ENCODE measurements at regions of chr4 and their contacts with region 1.

Region 1: DNA sequence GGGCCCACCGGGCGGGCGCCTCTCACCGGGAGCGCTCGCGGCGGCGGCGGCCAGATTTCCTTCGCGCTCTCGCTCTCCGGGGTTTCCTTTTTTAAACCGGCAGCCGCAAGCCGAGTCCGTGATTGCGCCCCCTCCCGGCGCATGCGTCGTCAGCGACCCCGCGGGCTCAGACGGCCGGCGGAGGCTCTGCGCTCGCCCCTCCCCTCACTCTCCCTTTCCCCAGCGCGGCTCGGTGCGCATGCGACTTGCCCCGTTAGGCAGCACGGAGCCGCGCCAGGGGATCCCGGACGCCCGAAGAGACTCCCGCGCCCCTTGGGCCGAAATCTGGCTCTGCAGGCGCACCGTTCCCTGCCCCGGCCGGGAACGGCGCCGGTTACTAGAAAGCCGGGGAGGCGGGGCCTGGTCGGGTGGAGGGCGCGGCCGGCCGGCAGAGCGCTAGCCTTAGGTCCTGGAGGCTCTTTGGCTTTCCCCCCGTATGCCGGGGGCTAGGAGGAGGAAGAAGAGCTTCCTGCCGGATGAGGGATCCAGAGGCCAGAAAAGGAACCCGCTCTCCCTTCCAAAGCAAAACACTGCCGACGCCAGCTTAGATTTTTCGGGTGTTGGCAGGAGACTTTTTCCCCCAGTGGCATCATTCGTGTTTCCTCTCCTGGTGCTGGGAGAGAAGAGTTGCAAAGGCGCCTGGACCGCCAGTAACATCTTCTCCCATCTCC is at the start of gene CLOCK:
- DNase-seq: peak; percentile 60 to 91 (median 82)
- ATAC-seq: peak; percentile 72
- H3K4me3 ChIP-seq: peak within 1 kb of the TSS; percentile 90 to 91
- H3K4me3 Mint-ChIP-seq: peak within 1 kb of the TSS; percentile 93
- H3K27ac ChIP-seq: peak within 1 kb of the TSS; percentile 71 to 82
- H3K27ac Mint-ChIP-seq: peak within 1 kb of the TSS; percentile 93
- H3K4me1 ChIP-seq: peaks cover 9% of the 10 kb centered on the region
- H3K4me1 Mint-ChIP-seq: peaks cover 40% of the 10 kb centered on the region
- H3K27me3 ChIP-seq: no peaks in the 10 kb centered on the region
- H3K27me3 Mint-ChIP-seq: peaks cover 5% of the 10 kb centered on the region
- CTCF ChIP-seq: peak; percentile 41
- total RNA-seq, gene CLOCK: 3.7 to 4.3 TPM

Region 2: DNA sequence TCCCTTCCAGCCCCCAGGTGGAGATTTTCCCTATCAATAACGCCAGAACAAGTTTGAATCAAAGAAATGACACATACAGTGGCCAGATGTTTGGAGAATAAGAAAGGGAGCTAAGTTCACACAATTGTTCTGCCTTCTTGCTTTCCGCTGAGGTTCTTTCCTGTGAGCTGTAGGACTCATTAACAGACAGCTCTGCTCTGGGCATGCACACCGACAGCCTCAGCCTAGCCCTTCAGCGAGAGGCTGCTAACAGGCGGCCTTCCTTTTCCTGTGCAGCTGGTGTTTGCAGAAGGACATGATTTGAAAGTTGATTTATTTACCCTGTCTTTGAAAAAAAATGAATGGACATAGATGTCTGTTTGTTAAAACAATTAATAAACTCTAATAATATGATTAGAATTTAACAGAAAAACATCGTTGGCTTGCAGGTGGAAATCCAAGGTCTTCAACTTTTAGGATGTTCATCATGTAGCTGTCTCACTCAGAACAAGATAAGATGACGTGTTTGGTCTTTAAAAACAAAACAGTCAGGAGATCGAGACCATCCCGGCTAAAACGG is 604.8 kb before region 1 on chr4:
- CTCF ChIA-PET with region 1: no interaction called
- POLR2A ChIA-PET with region 1: interaction called, 3 read pairs
- intact Hi-C with region 1: loop called (anchors 10 kb)
- DNase-seq: peak; percentile 18 to 78 (median 34)
- ATAC-seq: peak; percentile 79
- H3K4me3 ChIP-seq: peak overlapping the region in 1 of 2 experiments; percentile 12
- H3K4me3 Mint-ChIP-seq: peak overlapping the region; percentile 71
- H3K27ac ChIP-seq: peak overlapping the region; percentile 59 to 72
- H3K27ac Mint-ChIP-seq: peak overlapping the region; percentile 98
- H3K4me1 ChIP-seq: peaks cover 40% of the 10 kb centered on the region
- H3K4me1 Mint-ChIP-seq: peaks cover 56% of the 10 kb centered on the region
- H3K27me3 ChIP-seq: no peaks in the 10 kb centered on the region
- H3K27me3 Mint-ChIP-seq: no peaks in the 10 kb centered on the region
- CTCF ChIP-seq: no peak

Region 3: GRCh38 chr4:55395529-55396307 is 151.2 kb before region 1 on chr4 and contains the start of gene TMEM165:
- CTCF ChIA-PET with region 1: interaction called, 7 read pairs
- POLR2A ChIA-PET with region 1: interaction called, 11 read pairs
- intact Hi-C with region 1: loop called (anchors 1 to 2 kb)
- DNase-seq: peak; percentile 72 to 93 (median 86)
- ATAC-seq: peak; percentile 94
- H3K4me3 ChIP-seq: peak within 1 kb of the TSS; percentile 68 to 74
- H3K4me3 Mint-ChIP-seq: peak within 1 kb of the TSS; percentile 97
- H3K27ac ChIP-seq: peak within 1 kb of the TSS; percentile 83 to 93
- H3K27ac Mint-ChIP-seq: peak within 1 kb of the TSS; percentile 98
- H3K4me1 ChIP-seq: peaks cover 36% of the 10 kb centered on the region
- H3K4me1 Mint-ChIP-seq: peaks cover 38% of the 10 kb centered on the region
- H3K27me3 ChIP-seq: no peaks in the 10 kb centered on the region
- H3K27me3 Mint-ChIP-seq: no peaks in the 10 kb centered on the region
- CTCF ChIP-seq: peak; percentile 0
- total RNA-seq, gene TMEM165: 31.0 to 31.5 TPM

Region 4: GRCh38 chr4:55808186-55808585 is 261.3 kb after region 1 on chr4:
- CTCF ChIA-PET with region 1: no interaction called
- POLR2A ChIA-PET with region 1: no interaction called
- intact Hi-C with region 1: no loop called
- DNase-seq: no peak
- ATAC-seq: no peak
- H3K4me3 ChIP-seq: no peak overlapping the region
- H3K4me3 Mint-ChIP-seq: no peak overlapping the region
- H3K27ac ChIP-seq: no peak overlapping the region
- H3K27ac Mint-ChIP-seq: no peak overlapping the region
- H3K4me1 ChIP-seq: no peaks in the 10 kb centered on the region
- H3K4me1 Mint-ChIP-seq: no peaks in the 10 kb centered on the region
- H3K27me3 ChIP-seq: no peaks in the 10 kb centered on the region
- H3K27me3 Mint-ChIP-seq: peaks cover 8% of the 10 kb centered on the region
- CTCF ChIP-seq: no peak

Region 5: DNA sequence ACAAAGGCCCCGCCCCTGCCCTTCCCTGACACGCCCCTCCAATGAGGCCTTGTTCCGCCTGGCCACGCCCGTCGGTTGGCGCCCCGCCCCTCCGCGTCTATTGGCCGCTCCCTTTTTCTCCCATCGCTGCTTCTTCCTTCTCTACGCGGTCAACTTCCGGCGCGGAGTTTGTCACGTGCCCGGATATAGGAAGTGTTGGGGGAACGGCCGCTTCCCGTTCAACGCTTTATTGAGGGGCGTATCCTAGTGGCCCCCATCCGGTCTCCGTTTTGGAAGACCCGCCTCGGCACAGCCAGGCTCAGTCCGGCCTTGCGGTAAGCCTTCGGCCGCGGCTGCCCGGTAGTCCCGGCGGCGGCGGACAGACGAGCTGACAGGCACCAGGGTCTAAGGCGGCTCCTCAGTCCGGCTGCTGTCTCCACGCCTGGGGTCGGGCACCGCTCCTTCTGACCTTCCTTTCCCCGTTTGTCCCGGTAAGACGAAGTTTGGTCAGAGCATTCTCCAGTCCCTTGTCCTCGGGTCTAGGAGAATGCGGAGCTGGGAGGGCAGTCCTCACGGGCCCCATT is 306.7 kb after region 1 on chr4 and contains the start of gene EXOC1:
- CTCF ChIA-PET with region 1: no interaction called
- POLR2A ChIA-PET with region 1: no interaction called
- intact Hi-C with region 1: loop called (anchors 1 to 2 kb)
- DNase-seq: peak; percentile 90 to 98 (median 97)
- ATAC-seq: peak; percentile 96
- H3K4me3 ChIP-seq: peak within 1 kb of the TSS; percentile 96
- H3K4me3 Mint-ChIP-seq: peak within 1 kb of the TSS; percentile 36
- H3K27ac ChIP-seq: peak within 1 kb of the TSS; percentile 70 to 86
- H3K27ac Mint-ChIP-seq: peak within 1 kb of the TSS; percentile 64
- H3K4me1 ChIP-seq: peaks cover 40% of the 10 kb centered on the region
- H3K4me1 Mint-ChIP-seq: peaks cover 38% of the 10 kb centered on the region
- H3K27me3 ChIP-seq: no peaks in the 10 kb centered on the region
- H3K27me3 Mint-ChIP-seq: no peaks in the 10 kb centered on the region
- CTCF ChIP-seq: no peak
- total RNA-seq, gene EXOC1: 12.1 to 14.5 TPM

Region 6: DNA sequence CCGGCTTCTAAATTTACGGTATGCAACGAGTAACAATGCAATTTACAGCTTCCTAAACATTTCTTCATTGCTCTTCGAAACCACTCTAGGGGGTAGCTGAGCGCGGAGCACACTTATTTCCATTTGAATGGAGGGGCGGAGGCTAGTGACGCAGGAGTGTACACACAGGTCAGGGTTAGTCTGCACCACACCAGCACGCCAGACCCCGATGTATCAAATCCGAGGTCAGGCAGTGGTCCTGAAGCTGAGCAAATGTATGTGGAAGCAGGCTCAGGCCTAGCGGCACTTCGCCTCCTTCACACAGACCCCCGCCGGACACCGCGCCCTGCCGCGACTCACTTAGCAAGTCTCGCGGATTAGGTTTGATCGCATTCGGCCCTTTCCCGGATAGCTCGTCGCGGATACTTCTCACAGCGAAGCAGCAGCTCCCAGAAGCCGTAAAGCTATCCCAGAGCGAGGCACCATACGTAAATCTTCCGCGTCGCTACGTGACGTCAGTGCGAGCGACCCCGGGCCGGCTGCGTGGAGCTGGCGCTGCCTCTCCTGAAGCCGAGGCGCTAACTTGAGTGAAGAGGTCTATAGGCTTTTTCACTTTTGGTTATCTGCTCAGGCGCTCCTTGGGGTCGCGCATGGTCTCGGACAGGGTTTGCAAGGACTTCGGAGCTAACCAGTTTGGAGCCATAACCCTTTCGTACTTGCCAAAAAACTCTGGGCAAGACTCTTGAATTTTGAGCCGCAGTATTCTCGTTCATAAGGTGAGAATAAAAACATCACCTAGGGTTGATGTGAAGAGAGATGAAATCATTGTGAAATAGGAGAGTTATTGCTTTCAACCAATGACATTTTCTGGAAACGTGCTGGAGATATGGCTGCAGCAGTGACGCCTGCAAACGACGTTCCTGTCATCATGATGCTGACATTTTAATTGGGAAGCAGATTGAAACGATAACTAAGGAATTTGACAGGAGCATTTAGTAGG is 840.4 kb after region 1 on chr4 and contains the start of gene AASDH:
- CTCF ChIA-PET with region 1: no interaction called
- POLR2A ChIA-PET with region 1: no interaction called
- intact Hi-C with region 1: loop called (anchors 10 kb)
- DNase-seq: peak; percentile 91 to 99 (median 96)
- ATAC-seq: peak; percentile 88
- H3K4me3 ChIP-seq: peak within 1 kb of the TSS; percentile 79 to 82
- H3K4me3 Mint-ChIP-seq: peak within 1 kb of the TSS; percentile 97
- H3K27ac ChIP-seq: peak within 1 kb of the TSS; percentile 93 to 94
- H3K27ac Mint-ChIP-seq: peak within 1 kb of the TSS; percentile 99
- H3K4me1 ChIP-seq: peaks cover 21% of the 10 kb centered on the region
- H3K4me1 Mint-ChIP-seq: peaks cover 46% of the 10 kb centered on the region
- H3K27me3 ChIP-seq: no peaks in the 10 kb centered on the region
- H3K27me3 Mint-ChIP-seq: no peaks in the 10 kb centered on the region
- CTCF ChIP-seq: no peak
- total RNA-seq, gene AASDH: 9.1 to 9.8 TPM

Region 7: DNA sequence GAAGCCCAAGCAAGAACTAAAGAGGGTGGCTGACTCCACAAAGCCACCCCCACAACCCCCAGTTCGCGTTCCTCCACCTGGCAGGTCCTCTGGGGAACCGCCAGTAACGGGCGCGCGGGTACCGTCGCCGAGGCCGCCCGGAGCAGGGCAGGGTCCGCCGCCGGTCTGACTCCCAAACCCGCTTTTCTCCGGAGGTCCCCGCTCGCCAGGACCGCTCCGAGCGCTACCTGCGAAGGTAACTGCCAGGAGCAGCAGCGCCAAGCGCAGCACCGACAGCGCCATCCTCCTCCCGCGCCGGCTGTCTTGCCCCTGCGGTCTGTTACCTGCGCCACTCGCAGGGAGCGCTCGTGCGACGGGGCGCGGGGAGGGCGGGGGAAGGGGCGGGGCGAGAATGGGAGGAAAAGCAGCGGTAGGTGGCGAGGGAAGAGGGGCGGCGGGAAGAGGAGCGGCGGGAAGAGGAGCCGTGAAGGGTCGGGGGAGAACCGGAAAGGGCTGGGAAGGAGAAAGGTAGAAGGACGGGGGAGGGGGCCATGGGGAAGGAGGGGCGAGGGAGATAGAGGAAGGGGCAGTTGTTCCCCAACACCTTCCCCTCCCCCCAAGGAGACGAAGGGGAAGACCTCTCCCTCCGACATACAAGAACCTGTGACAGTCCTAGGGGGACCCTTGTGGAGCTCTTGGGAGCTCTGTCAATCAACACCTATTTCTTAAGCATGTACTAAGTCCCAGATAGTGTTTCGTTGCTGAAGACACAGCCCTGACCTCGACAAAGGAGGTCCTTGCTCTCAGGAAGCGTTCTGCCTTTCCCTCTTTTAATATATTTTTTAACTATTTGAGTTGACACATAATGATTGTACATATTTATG is 1274.7 kb after region 1 on chr4 and contains the start of gene SPINK2:
- CTCF ChIA-PET with region 1: no interaction called
- POLR2A ChIA-PET with region 1: no interaction called
- intact Hi-C with region 1: loop called in 1 of 2 experiments (anchors 5 kb)
- DNase-seq: peak; percentile 41 to 88 (median 76)
- ATAC-seq: peak; percentile 87
- H3K4me3 ChIP-seq: peak within 1 kb of the TSS; percentile 58 to 65
- H3K4me3 Mint-ChIP-seq: peak within 1 kb of the TSS; percentile 81
- H3K27ac ChIP-seq: peak within 1 kb of the TSS; percentile 36
- H3K27ac Mint-ChIP-seq: peak within 1 kb of the TSS; percentile 27
- H3K4me1 ChIP-seq: peaks cover 34% of the 10 kb centered on the region
- H3K4me1 Mint-ChIP-seq: peaks cover 36% of the 10 kb centered on the region
- H3K27me3 ChIP-seq: no peaks in the 10 kb centered on the region
- H3K27me3 Mint-ChIP-seq: no peaks in the 10 kb centered on the region
- CTCF ChIP-seq: no peak
- total RNA-seq, gene SPINK2: 2.6 to 4.4 TPM

Region 8: DNA sequence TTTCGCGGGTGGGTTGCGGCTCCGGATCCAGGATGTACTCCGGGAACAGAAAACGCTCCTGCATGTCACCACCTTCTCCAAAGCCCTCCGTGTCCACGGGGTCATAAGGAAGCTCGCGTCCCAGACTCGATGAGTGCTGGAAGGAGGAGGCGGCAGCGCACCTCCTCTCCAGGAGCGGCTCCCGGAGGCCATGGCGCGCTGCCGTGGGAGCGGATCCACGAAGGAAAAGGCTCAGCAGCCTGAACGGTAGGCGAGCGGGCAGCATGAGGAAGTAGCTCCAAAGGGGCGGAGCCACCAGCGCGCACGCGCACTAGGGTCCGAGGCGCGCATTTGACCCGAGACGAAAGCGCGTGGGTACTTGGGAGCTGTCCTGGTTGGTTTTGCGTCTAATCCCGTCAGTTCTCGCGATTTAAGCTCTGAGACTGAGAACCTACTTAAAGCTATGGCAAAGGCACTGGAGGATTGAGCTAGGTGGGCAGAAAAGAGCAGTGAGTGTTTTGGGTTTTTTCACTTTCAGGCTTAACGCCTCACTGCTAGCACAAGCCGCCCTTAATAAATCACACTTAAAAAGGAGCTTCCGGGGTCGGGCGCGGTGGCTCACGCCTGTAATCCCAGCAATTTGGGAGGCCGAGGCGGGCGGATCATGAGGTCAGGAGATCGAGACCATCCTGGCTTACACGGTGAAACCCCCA is 1430.6 kb after region 1 on chr4 and contains the start of gene NOA1:
- CTCF ChIA-PET with region 1: no interaction called
- POLR2A ChIA-PET with region 1: interaction called, 6 read pairs
- intact Hi-C with region 1: loop called in 1 of 2 experiments (anchors 5 kb)
- DNase-seq: peak; percentile 95 to 99 (median 97)
- ATAC-seq: peak; percentile 79
- H3K4me3 ChIP-seq: peak within 1 kb of the TSS; percentile 94 to 100
- H3K4me3 Mint-ChIP-seq: peak within 1 kb of the TSS; percentile 93
- H3K27ac ChIP-seq: peak within 1 kb of the TSS; percentile 78 to 84
- H3K27ac Mint-ChIP-seq: peak within 1 kb of the TSS; percentile 94
- H3K4me1 ChIP-seq: peaks cover 45% of the 10 kb centered on the region
- H3K4me1 Mint-ChIP-seq: peaks cover 56% of the 10 kb centered on the region
- H3K27me3 ChIP-seq: no peaks in the 10 kb centered on the region
- H3K27me3 Mint-ChIP-seq: no peaks in the 10 kb centered on the region
- CTCF ChIP-seq: no peak
- total RNA-seq, gene NOA1: 16.5 to 17.2 TPM

Measured in CD8-positive, alpha-beta T cell (primary cell).